GM12878 (cell line): ENCODE measurements at regions of chr14 and their contacts with region 1.

Region 1: DNA sequence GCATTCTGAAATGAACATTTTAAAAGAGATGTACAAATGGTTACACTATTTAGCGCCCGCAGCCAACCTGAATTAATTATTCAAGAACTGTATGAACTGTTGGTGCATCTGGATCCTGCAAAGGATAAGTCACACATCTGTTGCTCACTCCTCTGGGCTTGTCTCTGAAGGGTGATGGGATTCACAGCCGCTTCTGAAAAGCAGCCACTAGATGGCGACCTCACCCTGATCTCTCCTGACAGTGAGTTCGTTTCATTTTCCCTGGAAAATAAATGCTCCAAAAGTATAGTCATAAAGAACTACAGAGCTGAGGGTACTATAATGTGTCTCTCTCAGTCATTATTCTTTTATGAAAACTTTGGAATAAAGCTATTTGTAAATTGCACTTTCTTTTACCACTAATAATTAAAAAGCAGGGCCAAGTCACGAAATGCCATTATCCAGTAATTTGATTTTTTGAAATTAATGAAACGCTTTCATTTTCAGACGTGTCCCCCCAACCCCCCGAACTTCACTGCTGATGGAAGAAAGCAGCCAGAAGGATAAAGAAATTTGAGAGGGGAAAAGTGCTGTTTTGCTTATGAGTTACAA is 789.6 kb downstream of the NRXN3 start:
- DNase-seq: no peak
- ATAC-seq: peak; percentile 87
- H3K4me3 ChIP-seq: no peak overlapping the region
- H3K27ac ChIP-seq: no peak overlapping the region
- H3K4me1 ChIP-seq: no peaks in the 10 kb centered on the region
- H3K27me3 ChIP-seq: no peaks in the 10 kb centered on the region
- CTCF ChIP-seq: peak; percentile 70 to 82 (median 80)
- EP300 ChIP-seq: no peak
- POLR2A ChIP-seq: no peak
- RAD21 ChIP-seq: peak; percentile 49

Region 2: GRCh38 chr14:78933948-78934524 is 25.7 kb before region 1 on chr14:
- CTCF ChIA-PET with region 1: interaction called, 11 read pairs
- POLR2A ChIA-PET with region 1: no interaction called
- RAD21 ChIA-PET with region 1: interaction called, 3 read pairs
- SMC1A ChIA-PET with region 1: interaction called, 3 read pairs
- in situ Hi-C with region 1: no loop called
- intact Hi-C with region 1: no loop called
- DNase-seq: no peak
- ATAC-seq: peak; percentile 33; the same call in 2 of the 3 replicates
- H3K4me3 ChIP-seq: no peak overlapping the region
- H3K27ac ChIP-seq: no peak overlapping the region
- H3K4me1 ChIP-seq: no peaks in the 10 kb centered on the region
- H3K27me3 ChIP-seq: no peaks in the 10 kb centered on the region
- CTCF ChIP-seq: peak; percentile 33 to 49 (median 41); a peak in 3 of 6 replicates
- EP300 ChIP-seq: no peak
- POLR2A ChIP-seq: no peak
- RAD21 ChIP-seq: peak; percentile 57

Region 3: DNA sequence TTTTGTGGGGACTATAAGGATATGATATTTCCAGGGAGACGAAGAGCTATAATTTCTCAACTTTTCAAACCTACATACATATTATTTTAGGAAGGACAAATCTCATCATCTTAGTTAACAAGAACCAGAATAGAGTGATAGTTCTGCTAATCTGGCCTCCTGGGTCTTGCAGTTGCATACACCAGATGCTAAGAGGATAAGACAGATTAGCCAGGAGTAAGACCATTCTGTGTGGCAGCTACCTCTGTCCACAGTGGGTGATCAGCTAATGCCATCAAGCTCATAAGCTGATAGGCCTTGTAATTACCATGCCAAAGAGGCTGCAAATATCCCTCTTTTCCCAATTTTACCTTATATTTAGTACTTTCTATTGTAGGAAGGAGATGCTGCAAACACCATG is 12.8 kb before region 1 on chr14:
- CTCF ChIA-PET with region 1: interaction called, 10 read pairs
- POLR2A ChIA-PET with region 1: no interaction called
- RAD21 ChIA-PET with region 1: no interaction called
- SMC1A ChIA-PET with region 1: no interaction called
- in situ Hi-C with region 1: no loop called
- intact Hi-C with region 1: no loop called
- DNase-seq: no peak
- ATAC-seq: no peak
- H3K4me3 ChIP-seq: no peak overlapping the region
- H3K27ac ChIP-seq: no peak overlapping the region
- H3K4me1 ChIP-seq: no peaks in the 10 kb centered on the region
- H3K27me3 ChIP-seq: no peaks in the 10 kb centered on the region
- CTCF ChIP-seq: no peak
- EP300 ChIP-seq: no peak
- POLR2A ChIP-seq: no peak
- RAD21 ChIP-seq: no peak

Region 4: DNA sequence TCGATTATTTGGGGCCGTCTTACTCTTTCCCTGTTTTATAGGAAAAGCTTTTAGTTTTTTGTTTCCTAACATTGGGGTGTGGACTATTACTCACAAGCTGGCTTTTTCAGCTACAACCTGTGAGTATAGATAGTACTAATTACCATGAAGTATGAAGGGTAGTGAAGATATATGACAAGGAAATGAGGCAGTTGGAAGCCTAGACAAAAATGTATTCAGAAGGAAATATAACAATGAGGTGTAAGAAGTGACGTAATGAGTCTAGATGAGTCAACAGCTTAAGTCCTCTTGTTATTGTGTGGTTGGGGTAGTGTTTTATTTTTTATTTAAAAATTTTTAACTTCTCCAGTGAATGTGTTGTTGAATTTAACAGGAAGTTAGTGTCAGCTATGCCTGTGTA is 14.9 kb after region 1 on chr14:
- CTCF ChIA-PET with region 1: interaction called, 33 read pairs
- POLR2A ChIA-PET with region 1: no interaction called
- RAD21 ChIA-PET with region 1: no interaction called
- SMC1A ChIA-PET with region 1: interaction called, 3 read pairs
- in situ Hi-C with region 1: no loop called
- intact Hi-C with region 1: no loop called
- DNase-seq: no peak
- ATAC-seq: no peak
- H3K4me3 ChIP-seq: no peak overlapping the region
- H3K27ac ChIP-seq: no peak overlapping the region
- H3K4me1 ChIP-seq: no peaks in the 10 kb centered on the region; the same call in 1 of the 2 replicates
- H3K27me3 ChIP-seq: no peaks in the 10 kb centered on the region
- CTCF ChIP-seq: no peak
- EP300 ChIP-seq: no peak
- POLR2A ChIP-seq: no peak
- RAD21 ChIP-seq: no peak

Region 5: GRCh38 chr14:78997811-78998210 is 38.0 kb after region 1 on chr14:
- CTCF ChIA-PET with region 1: no interaction called
- POLR2A ChIA-PET with region 1: no interaction called
- RAD21 ChIA-PET with region 1: no interaction called
- SMC1A ChIA-PET with region 1: no interaction called
- in situ Hi-C with region 1: no loop called
- intact Hi-C with region 1: no loop called
- DNase-seq: no peak
- ATAC-seq: no peak
- H3K4me3 ChIP-seq: no peak overlapping the region
- H3K27ac ChIP-seq: no peak overlapping the region
- H3K4me1 ChIP-seq: no peaks in the 10 kb centered on the region
- H3K27me3 ChIP-seq: no peaks in the 10 kb centered on the region
- CTCF ChIP-seq: no peak
- EP300 ChIP-seq: no peak
- POLR2A ChIP-seq: no peak
- RAD21 ChIP-seq: no peak

Region 6: DNA sequence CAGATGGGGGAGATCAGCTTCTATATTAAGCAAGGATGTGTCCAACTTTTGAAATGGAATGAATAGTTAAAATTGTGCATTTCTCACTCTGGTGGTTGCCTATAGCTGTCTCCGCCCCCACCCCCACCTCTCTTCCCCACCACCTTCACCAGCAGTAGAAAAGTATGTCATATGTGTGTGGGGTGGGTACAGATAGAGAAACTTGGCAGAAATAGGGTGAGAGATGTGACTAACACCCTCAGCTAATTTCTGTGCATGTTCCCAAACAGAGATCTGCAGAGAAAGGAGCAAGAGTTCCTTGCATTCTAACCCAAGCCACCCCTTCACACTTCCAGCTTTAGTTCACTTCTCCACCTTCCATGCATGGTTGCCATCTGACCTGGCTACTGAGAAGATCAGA is 190.5 kb after region 1 on chr14:
- CTCF ChIA-PET with region 1: no interaction called
- POLR2A ChIA-PET with region 1: no interaction called
- RAD21 ChIA-PET with region 1: no interaction called
- SMC1A ChIA-PET with region 1: no interaction called
- in situ Hi-C with region 1: no loop called
- intact Hi-C with region 1: no loop called
- DNase-seq: no peak
- ATAC-seq: no peak
- H3K4me3 ChIP-seq: no peak overlapping the region
- H3K27ac ChIP-seq: no peak overlapping the region
- H3K4me1 ChIP-seq: no peaks in the 10 kb centered on the region
- H3K27me3 ChIP-seq: no peaks in the 10 kb centered on the region
- CTCF ChIP-seq: no peak
- EP300 ChIP-seq: no peak
- POLR2A ChIP-seq: no peak
- RAD21 ChIP-seq: no peak

Region 7: DNA sequence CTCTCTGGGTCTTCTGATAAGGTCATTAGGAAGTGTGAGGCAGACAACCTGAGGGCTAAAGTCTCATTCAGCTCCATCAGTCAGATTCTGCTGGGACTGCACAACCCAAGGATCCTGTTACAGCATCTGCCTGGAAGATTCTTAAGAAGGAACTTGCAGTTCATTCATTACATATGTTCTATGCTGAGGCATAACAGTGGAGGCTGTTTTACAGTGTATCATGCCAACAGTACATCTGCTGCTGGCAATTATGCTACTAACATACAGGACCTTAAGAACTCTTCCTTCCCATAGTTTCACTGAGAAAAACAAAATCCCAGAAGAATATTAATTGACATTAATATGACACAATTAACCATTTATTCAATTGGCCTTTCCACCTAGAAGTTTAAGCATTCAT is 282.9 kb after region 1 on chr14:
- CTCF ChIA-PET with region 1: no interaction called
- POLR2A ChIA-PET with region 1: no interaction called
- RAD21 ChIA-PET with region 1: no interaction called
- SMC1A ChIA-PET with region 1: no interaction called
- in situ Hi-C with region 1: no loop called
- intact Hi-C with region 1: no loop called
- DNase-seq: no peak
- ATAC-seq: no peak
- H3K4me3 ChIP-seq: no peak overlapping the region
- H3K27ac ChIP-seq: no peak overlapping the region
- H3K4me1 ChIP-seq: no peaks in the 10 kb centered on the region
- H3K27me3 ChIP-seq: no peaks in the 10 kb centered on the region
- CTCF ChIP-seq: no peak
- EP300 ChIP-seq: no peak
- POLR2A ChIP-seq: no peak
- RAD21 ChIP-seq: no peak